Colonic mucosa (tissue), 4 donors: ENCODE measurements at regions of chr4 and their contacts with region 1.

Region 1: DNA sequence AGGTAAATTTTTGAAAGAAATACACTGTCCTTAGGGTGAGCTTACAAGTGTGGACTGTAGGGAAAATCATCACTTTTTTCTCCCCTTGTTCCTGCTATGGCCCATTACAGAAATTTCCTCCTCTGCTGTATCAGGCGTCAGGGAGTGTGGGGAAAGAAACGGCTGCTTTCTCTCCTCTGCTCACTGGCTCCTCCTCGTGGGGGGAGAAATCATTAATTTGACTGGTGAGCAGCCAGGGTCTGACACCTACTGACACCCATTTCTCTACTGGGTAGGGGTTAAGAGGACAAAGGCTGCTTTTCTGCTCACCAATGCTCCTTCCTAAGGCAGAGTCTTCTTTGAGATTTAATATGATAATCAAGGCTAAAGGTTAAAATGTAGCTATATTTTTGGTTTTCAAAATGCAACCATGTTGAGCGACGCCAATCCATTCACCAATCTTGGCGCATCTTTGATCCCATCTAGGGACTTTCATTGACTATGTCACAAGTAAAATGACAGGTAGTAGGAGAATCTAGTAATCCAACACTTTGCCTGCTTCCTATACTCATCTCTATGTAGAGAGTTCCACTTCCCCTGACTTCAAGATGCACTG is 25.1 kb downstream of the SETD7 start:
- DNase-seq: peak; percentile 76
- H3K4me3 ChIP-seq: no peak overlapping the region
- H3K27ac ChIP-seq: no peak overlapping the region
- H3K4me1 ChIP-seq: no peaks in the 10 kb centered on the region
- H3K27me3 ChIP-seq: no peaks in the 10 kb centered on the region
- CTCF ChIP-seq: peak; percentile 43

Region 2: GRCh38 chr4:139416073-139416673 is 114.8 kb before region 1 on chr4:
- intact Hi-C with region 1: loop called (anchors 10 kb)
- DNase-seq: no peak
- H3K4me3 ChIP-seq: no peak overlapping the region
- H3K27ac ChIP-seq: no peak overlapping the region
- H3K4me1 ChIP-seq: no peaks in the 10 kb centered on the region
- H3K27me3 ChIP-seq: no peaks in the 10 kb centered on the region
- CTCF ChIP-seq: peak; percentile 65

Region 3: DNA sequence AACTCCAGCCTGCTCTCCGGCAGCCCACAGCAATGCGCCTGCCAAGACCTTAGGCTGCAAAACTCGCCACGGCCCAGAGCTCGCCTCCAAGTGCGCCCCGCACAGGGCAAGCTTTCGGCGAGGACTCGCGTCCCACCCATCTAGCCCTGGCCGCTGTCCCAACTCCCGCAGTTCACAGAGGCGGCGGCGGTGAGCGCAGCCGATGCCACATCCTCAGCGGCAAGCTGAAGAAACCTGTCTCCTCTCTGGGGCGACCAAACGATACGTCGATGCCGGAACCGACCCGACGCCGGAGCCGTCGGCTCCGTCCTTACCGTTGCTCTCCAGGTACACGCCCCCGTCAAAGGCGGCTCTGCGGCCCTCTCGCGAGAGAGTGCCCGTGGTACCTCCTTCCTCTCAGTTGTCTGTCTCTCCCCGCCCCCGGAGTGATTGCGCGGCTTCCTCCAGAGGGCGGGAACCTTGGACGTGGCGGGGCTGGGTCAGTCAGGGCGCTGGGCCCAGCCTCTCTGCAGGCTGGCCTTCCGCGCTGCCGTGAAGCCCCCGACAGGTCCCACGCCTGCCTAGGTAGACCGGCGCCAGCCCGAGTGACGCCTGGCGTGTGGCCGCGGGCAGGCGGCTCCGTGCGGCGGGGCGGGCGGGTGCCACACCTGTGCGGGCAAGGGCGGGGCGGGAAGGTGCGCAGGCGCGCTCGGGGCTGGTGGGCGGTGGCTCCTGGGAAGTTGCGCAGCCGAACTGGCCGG is 77.4 kb before region 1 on chr4:
- intact Hi-C with region 1: loop called (anchors 10 kb)
- DNase-seq: peak; percentile 98
- H3K4me3 ChIP-seq: peak overlapping the region; percentile 83
- H3K27ac ChIP-seq: peak overlapping the region; percentile 99
- H3K4me1 ChIP-seq: peaks cover 6% of the 10 kb centered on the region
- H3K27me3 ChIP-seq: no peaks in the 10 kb centered on the region
- CTCF ChIP-seq: peak; percentile 10

Region 4: DNA sequence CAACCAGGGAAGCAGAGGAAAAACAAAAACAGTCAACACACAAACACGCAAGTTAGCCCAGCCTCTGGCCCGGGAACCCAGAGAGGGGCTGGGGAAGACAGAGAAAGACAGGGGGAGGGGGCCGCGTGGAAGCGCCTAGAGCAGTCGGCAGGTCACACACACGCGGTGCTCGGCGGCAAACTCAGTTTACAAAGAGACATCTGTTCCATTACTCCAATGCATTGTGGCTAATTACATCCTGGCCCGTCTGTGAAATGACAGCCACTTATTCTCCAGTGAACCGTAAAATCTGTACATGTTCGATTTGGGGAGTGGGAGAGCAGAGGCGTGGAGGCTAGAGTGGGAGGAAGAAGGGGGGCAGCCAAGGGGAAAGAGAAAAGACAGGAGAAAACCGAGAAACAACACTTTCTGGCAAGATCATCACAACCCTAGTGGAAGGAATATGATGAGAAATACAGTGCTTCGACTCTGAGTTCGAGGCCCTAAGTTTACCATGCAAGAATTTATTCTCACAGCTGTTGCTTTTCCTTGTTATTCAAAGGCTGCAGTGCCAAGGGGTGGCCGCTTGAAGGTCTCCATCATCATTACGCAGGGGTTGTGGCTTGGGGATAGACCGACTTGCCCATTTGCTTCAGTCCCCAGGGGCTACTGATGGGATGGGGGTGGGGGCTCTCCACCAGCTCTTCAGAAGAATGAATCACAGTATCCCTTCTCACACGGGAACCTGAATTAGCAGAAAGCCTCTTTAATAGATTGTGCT is 302.4 kb after region 1 on chr4:
- intact Hi-C with region 1: no loop called
- DNase-seq: no peak
- H3K4me3 ChIP-seq: no peak overlapping the region
- H3K27ac ChIP-seq: no peak overlapping the region
- H3K4me1 ChIP-seq: no peaks in the 10 kb centered on the region
- H3K27me3 ChIP-seq: no peaks in the 10 kb centered on the region
- CTCF ChIP-seq: no peak